ENCODE measurements at regions of chr6 and their contacts with region 1.

Region 1: DNA sequence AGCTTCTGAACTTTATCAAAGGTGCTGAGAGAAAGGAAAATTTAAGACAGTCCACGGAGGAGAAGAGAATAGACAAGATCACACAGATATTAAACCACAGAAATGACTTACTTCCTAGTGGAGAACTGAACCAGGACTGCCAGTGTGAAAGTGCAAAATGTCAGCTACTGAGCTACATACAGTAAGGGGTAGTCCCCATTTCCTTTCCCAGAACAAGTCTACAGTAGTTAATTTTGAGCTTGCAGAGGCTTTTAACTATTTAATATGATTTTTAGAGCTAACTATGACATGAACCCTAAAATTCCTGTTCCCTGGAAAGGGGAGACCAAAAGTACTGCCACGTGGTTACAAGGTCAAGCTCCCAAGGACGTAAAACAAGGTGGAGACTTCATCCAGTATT is 45.1 kb downstream of the CEP85L start:
- DNase-seq: no peak
- H3K4me3 ChIP-seq: no peak overlapping the region
- H3K27ac ChIP-seq: no peak overlapping the region
- H3K4me1 ChIP-seq: no peaks in the 10 kb centered on the region
- H3K27me3 ChIP-seq: no peaks in the 10 kb centered on the region
- CTCF ChIP-seq: no peak
- POLR2A ChIP-seq: no peak

Region 2: DNA sequence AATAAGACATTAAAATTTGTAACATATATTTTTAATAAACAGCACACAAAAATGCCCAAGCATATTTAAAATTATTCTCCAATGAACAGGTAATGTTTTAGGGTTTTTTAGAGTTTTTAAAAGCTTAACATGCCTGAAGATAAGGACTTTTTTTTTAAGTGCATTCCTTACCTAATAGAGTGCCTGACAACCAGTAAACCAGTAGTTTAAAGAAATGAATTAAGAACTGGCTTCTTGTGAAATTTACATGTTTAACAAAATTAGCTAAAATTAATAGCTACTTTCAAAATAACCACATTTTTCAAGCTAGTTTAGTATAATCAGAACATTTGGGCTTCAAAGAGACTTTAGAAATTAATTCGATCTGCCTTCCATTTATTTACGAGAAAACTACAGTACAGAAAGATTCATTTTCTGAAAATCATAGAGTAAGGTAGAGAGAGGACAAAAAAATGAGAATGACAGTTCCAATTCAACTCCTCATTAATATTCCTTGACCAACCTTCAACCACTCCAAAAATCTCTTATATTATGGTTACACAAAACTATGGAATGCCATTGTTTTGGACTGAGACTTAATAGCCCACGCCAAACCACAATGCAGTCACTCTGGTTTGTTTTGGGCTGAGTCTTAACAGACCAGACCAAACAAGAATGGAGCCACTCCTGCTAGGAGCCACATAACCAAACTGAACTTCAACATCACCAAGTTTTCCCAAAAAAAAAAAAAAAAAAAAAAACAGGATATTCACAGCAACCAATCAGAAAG is 63.9 kb before region 1 on chr6:
- intact Hi-C with region 1: no loop called
- DNase-seq: no peak
- H3K4me3 ChIP-seq: no peak overlapping the region
- H3K27ac ChIP-seq: no peak overlapping the region
- H3K4me1 ChIP-seq: no peaks in the 10 kb centered on the region
- H3K27me3 ChIP-seq: no peaks in the 10 kb centered on the region
- CTCF ChIP-seq: no peak
- POLR2A ChIP-seq: no peak

Region 3: GRCh38 chr6:118589186-118589585 is 17.1 kb before region 1 on chr6:
- intact Hi-C with region 1: loop called (anchors 1 kb)
- DNase-seq: no peak
- H3K4me3 ChIP-seq: no peak overlapping the region
- H3K27ac ChIP-seq: no peak overlapping the region
- H3K4me1 ChIP-seq: no peaks in the 10 kb centered on the region
- H3K27me3 ChIP-seq: no peaks in the 10 kb centered on the region
- CTCF ChIP-seq: no peak
- POLR2A ChIP-seq: no peak

Region 4: DNA sequence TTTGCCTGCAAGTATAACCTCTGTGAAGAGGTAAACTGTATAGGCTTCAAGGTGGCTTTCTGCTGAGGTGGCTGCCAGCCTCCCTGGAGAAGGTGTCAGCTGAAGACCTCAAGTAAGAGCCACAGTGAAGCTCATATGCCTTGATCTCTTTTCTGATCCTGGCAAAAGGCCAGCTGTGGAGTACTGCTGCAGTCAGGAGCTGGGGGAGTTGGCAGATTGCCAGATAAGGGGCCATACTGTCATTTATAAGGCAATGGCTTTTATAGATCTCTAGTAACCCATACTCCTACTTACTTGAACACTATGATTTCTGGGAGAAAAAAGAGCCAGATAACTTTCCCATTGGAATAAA is 53.9 kb after region 1 on chr6:
- intact Hi-C with region 1: no loop called
- DNase-seq: no peak
- H3K4me3 ChIP-seq: no peak overlapping the region
- H3K27ac ChIP-seq: no peak overlapping the region
- H3K4me1 ChIP-seq: peaks cover 0 to 6% of the 10 kb centered on the region in 2 donors
- H3K27me3 ChIP-seq: no peaks in the 10 kb centered on the region
- CTCF ChIP-seq: no peak
- POLR2A ChIP-seq: no peak